Activated CD4-positive, alpha-beta memory T cell treated with anti-CD3 and anti-CD28 coated beads, Interleukin-2, amount 10 ng/mL, durations not matched to agents 7 days and 5 days (primary cell): ENCODE measurements at regions of chr12 and their contacts with region 1.

Region 1: GRCh38 chr12:123388177-123388947 is 4.4 kb downstream of the KMT5A start:
- DNase-seq: peak; percentile 80
- H3K4me3 Mint-ChIP-seq: peak overlapping the region; percentile 78
- H3K27ac Mint-ChIP-seq: peak overlapping the region; percentile 91
- H3K4me1 Mint-ChIP-seq: peaks cover 54% of the 10 kb centered on the region
- H3K27me3 Mint-ChIP-seq: no peaks in the 10 kb centered on the region

Region 2: DNA sequence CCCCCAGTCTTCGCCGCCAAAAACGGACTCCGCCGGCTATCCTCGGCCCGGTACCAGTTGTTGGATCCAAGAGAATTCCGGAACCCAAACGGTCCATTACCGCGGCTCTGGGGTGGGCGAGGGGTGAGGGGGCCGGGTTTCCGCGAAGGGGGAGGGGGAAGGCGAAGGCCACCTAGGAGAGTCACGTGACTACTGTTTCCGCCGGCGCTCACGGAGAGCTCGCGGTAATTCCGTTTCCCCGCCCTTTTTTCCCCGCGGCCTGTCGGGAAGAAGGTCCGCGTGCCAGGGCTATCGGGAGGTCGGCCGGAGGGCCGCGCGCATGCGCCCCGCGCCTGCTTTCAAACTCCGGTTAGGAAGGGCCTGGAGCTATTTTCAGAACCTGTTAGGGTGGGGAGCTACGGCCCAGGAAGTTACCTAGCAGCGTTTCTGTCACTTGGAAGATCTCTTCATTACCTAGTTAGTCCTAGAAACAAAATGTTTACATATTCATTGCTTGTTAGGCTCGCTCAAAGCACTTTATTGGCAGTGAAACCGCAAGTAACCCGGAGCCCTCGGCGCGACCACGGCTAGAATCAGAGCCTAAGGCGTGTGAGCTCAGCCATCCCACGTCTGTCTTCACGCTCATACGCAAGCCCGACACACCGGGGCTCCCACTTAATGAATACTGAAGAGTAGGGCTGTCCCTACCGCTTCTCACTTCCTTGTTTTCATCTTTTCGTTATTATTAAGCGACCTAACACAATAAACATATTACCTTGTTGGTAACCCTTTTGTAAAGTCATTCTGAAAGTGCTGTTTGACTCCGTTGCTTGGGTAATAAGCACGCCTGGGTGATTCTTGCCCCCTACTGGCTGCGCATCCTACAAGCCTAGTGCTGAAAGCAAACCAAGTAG is 23.1 kb before region 1 on chr12:
- CTCF ChIA-PET with region 1: interaction called, 49 read pairs
- POLR2A ChIA-PET with region 1: interaction called, 107 read pairs
- DNase-seq: peak; percentile 98
- H3K4me3 Mint-ChIP-seq: peak overlapping the region; percentile 82
- H3K27ac Mint-ChIP-seq: peak overlapping the region; percentile 96
- H3K4me1 Mint-ChIP-seq: peaks cover 18% of the 10 kb centered on the region
- H3K27me3 Mint-ChIP-seq: no peaks in the 10 kb centered on the region

Region 3: GRCh38 chr12:123427036-123427769 is 38.8 kb after region 1 on chr12:
- CTCF ChIA-PET with region 1: interaction called, 4 read pairs
- POLR2A ChIA-PET with region 1: interaction called, 13 read pairs
- DNase-seq: peak; percentile 53
- H3K4me3 Mint-ChIP-seq: peak overlapping the region; percentile 10
- H3K27ac Mint-ChIP-seq: peak overlapping the region; percentile 78
- H3K4me1 Mint-ChIP-seq: peaks cover 40% of the 10 kb centered on the region
- H3K27me3 Mint-ChIP-seq: no peaks in the 10 kb centered on the region

Region 4: DNA sequence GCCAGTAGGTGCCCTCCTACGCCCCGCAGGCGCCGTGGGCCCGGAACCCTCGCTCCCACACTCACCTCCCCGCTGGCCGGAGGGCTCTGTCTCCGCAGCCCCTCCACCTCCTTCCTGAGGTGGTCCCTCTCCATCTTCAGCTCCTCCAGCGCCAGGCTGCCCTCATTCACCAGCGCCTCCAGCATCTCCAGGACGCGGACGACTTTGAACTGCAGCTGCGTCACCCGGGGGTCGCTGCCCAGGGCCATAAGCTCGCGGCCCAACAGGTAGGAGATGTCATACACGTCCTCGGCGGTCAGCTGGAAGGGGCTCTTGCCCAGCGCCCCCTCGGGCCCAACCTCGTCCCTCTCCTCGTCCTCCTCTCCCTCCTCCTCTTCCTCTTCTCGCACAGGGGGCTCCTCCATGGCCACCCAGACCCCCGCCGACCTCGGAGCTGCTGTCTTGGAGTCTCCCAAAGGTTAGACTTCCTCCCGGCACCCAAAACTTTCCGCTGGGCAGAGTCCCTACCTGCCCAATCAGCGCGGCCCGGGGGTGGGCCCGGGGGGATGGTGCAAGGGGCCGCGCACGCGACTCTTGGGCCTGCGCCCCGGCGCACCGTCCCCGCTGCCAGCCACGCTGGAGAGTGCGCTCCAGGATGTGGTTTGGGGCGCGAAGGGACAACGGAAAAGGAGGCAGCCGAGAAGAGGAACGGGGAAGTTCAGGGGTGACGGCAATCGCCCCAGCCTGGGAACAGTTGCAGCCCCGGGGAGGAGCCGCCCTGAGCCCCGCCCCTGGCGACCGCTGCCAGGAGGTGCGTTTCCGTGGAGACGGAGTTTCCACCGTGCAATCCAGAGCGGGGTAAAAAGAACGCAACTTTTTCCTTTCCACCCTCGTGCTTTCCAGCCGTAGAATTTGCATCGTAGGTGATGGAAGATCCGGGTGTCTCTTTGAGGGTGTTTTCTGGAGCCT is 47.9 kb after region 1 on chr12 and contains the start of gene RILPL2:
- CTCF ChIA-PET with region 1: interaction called, 4 read pairs
- POLR2A ChIA-PET with region 1: interaction called, 10 read pairs
- DNase-seq: peak; percentile 93
- H3K4me3 Mint-ChIP-seq: peak within 1 kb of the TSS; percentile 97
- H3K27ac Mint-ChIP-seq: peak within 1 kb of the TSS; percentile 96
- H3K4me1 Mint-ChIP-seq: peaks cover 49% of the 10 kb centered on the region
- H3K27me3 Mint-ChIP-seq: no peaks in the 10 kb centered on the region
- total RNA-seq, gene RILPL2: 8.9 to 9.0 TPM

Region 5: DNA sequence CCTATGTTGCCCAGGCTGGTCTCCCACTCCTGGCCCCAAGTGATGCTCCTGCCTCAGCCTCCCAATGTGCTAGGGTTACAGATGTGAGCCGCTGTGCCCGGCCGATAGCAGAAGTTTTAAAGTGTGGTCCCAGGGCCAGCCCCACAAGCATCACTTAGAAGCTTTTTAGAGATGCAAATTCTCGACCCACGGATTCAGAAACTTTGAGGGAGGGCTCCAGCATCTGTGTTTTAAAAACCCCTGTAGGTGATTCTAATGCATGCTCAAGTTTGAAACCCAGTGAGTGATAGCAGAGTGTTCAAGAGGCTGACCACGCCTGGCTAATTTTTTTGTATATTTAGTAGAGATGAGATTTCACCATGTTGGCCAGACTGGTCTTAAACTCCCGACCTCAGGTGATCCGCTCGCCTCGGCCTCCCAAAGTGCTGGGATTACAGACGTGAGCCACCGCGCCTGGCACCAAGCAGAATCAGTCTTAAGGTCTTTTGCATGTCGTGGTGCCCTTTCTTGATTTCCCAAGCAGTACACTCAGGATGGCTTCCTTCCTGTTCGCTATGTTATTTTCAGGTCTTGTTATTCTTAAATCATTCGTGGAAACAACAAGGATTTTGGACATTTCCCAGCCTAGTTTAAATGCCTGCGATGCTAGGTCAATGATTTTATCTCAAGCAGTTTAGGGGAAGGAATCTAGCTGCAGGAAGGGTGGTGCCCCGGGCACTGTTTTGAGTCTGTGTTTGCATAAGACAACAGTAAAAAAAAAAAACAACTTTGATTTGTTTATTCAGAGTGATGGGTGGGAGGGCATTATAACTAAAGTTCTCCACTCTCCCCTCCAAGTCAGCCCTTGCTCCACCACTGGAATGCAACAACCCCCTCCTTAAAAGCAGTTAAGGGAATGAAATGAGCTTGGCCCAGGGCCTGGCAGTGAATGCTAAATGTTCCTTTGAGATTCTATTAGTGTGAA is 57.3 kb after region 1 on chr12:
- CTCF ChIA-PET with region 1: interaction called, 3 read pairs
- POLR2A ChIA-PET with region 1: interaction called, 10 read pairs
- DNase-seq: no peak
- H3K4me3 Mint-ChIP-seq: no peak overlapping the region
- H3K27ac Mint-ChIP-seq: peak overlapping the region; percentile 65
- H3K4me1 Mint-ChIP-seq: peaks cover 41% of the 10 kb centered on the region
- H3K27me3 Mint-ChIP-seq: no peaks in the 10 kb centered on the region

Region 6: GRCh38 chr12:123457980-123458783 is 69.8 kb after region 1 on chr12 and contains the start of gene SNRNP35:
- CTCF ChIA-PET with region 1: interaction called, 5 read pairs
- POLR2A ChIA-PET with region 1: interaction called, 36 read pairs
- DNase-seq: peak; percentile 86
- H3K4me3 Mint-ChIP-seq: peak within 1 kb of the TSS; percentile 94
- H3K27ac Mint-ChIP-seq: peak within 1 kb of the TSS; percentile 99
- H3K4me1 Mint-ChIP-seq: peaks cover 23% of the 10 kb centered on the region
- H3K27me3 Mint-ChIP-seq: no peaks in the 10 kb centered on the region
- total RNA-seq, gene SNRNP35: 29.7 to 35.0 TPM